Right ventricle myocardium inferior (tissue), 1 donor: ENCODE measurements at regions of chr15 and their contacts with region 1.

Region 1: GRCh38 chr15:58331903-58332675 is 99.7 kb upstream of the LIPC start:
- DNase-seq: peak; percentile 94
- ATAC-seq: peak; percentile 98

Region 2: DNA sequence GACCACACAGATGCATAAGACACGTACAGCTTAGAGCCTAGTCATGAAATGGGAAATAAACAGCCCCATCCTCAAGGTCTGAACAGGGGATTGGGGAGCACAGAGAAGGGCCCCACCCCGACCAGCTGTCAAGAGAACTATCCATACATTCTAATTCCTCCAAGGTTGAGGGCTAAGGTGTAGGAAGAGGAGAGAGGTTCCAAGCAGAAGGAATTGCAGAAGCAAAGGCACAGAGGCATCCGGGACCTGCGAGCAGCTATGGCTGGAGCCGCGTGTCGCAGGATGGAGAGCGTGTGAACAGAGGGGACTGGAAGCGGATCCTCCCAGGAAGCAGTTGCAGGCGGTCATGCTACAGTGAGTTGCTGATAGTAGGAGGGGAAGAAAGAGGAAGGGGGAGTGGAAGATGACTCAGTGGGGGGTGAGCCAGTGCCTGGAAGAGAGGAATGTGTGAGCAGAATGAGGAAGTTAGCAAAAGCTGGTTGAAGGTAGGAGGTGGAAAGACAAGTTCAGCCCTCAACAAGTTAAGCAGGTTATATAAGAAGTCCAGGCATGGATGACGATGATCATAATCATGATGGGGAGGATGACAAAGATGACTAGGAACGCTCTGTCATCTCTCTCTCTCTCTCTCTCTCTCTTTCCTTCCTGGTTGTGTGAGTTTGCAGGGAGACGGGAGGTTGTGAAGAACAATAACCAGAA is 189.4 kb after region 1 on chr15:
- intact Hi-C with region 1: loop called (anchors 5 kb)
- DNase-seq: peak; percentile 70
- ATAC-seq: peak; percentile 25